Activated CD4-positive, alpha-beta T cell treated with anti-CD3 and anti-CD28 coated beads, Interleukin-2, amount 10 ng/mL, durations not matched to agents 24 days and 14 days (primary cell): ENCODE measurements at regions of chr2 and their contacts with region 1.

Region 1: DNA sequence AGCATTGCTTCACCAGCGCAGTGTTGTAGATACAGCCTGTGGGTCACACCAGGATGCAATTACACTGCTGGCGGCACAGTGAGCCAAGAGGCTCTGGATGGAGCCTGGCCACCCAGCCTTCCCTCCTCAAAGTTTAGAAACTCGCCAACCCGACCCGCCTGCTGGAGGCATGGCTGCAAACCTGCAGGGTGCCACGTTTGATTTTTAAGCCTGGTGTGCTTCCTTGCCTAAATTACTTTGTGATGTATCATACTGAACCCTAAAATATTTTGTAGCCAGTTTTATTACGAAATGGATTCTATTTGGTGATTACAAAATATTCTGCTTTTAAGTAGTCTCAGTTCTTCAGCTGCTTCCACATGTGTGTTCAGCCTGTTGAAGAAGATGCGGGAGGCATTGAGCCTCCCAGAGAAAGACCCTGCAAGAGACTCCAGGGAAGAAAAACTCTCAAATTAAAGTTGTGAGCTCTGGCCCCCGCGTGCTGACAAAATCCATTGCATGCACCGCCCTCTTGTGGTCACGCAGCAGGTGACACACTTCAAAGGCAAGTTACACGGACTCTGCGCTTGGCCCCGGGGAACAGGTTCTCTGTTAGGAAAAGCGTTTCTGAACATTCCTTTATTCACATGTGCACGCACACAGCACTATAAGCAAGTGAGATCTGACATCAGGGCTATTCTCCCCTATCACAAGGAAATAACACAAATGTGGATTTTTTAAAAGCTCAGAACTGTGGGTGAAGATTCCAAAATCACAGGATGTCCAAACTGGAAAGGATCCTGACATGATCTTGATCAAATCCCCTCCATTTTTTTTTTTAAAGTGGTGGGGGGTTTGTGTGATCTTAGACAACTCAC is 63.0 kb upstream of the TWIST2 start:
- DNase-seq: peak; percentile 84
- H3K4me3 Mint-ChIP-seq: no peak overlapping the region
- H3K27ac Mint-ChIP-seq: no peak overlapping the region
- H3K4me1 Mint-ChIP-seq: no peaks in the 10 kb centered on the region
- H3K27me3 Mint-ChIP-seq: no peaks in the 10 kb centered on the region

Region 2: DNA sequence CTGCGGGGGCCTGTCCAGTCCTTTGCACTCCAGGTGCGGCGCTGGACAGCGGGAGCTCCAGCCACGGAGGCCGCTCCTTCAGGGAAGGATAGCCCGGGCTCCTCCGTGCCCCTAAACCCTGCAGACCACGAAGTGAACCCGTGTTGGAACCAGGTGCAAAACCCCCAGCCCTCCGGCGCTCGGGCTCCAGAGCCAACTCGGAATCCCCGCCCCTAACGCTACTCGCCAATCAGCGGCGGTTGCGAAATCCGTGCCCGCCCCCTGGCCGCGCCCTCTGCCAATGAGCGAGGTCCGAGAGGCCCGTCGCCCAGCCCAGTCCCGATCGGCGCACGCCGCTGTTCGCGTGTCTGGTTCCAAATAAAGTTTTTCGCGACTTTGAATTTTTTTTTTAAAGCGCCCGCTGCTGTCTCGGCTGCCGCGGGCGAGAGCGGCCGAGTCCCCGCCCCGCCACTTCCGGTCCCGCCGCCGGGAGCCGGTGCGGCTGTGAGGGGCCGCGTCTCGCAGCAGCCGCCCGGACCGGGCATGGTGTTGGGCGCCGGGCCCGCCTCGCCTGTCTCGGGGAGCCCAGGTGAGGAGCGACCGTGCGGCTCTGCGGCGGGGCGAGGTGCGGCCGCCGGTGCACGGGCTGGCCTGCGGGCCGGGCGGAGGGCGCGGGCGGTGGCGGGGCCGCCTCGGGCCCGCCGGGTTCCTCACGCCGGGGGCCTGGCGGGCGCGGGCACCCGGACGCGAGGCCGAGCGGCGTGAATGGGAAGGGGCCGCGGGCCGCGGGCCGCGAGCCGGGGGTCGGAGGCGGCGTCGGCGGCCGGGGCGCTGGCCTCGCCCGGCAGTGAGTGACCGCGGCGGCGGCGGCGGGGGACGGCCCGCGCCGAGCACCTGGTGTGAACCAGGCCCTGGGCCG is 818.1 kb before region 1 on chr2 and contains the start of gene UBE2F:
- intact Hi-C with region 1: no loop called
- DNase-seq: peak; percentile 100
- H3K4me3 Mint-ChIP-seq: peak within 1 kb of the TSS; percentile 94
- H3K27ac Mint-ChIP-seq: peak within 1 kb of the TSS; percentile 92
- H3K4me1 Mint-ChIP-seq: peaks cover 33% of the 10 kb centered on the region
- H3K27me3 Mint-ChIP-seq: no peaks in the 10 kb centered on the region
- total RNA-seq, gene UBE2F: 115 and 124 TPM in 2 replicates

Region 3: DNA sequence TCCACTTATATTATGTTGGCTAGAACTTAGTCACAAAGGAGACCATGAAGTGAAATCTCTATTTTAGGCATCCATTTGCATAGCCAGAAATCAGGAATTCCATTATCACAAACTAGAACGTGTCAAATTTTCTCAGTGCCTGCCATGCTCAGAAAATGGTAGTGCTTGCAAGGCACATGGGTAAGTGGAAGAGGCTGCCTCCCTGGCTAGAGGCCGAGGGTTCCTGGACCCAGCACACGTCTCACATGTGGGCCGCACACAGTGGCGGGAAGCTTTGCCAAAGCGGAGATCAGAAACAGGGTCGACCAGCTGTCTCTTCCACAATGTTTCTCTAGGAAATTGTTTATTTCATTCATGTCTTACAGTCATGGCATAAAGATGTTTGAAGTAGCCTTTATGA is 422.3 kb before region 1 on chr2:
- intact Hi-C with region 1: loop called (anchors 5 kb)
- DNase-seq: no peak
- H3K4me3 Mint-ChIP-seq: no peak overlapping the region
- H3K27ac Mint-ChIP-seq: no peak overlapping the region
- H3K4me1 Mint-ChIP-seq: peaks cover 17% of the 10 kb centered on the region
- H3K27me3 Mint-ChIP-seq: no peaks in the 10 kb centered on the region

Region 4: GRCh38 chr2:238513346-238513745 is 271.6 kb before region 1 on chr2:
- intact Hi-C with region 1: loop called (anchors 10 kb)
- DNase-seq: peak; percentile 76
- H3K4me3 Mint-ChIP-seq: no peak overlapping the region
- H3K27ac Mint-ChIP-seq: no peak overlapping the region
- H3K4me1 Mint-ChIP-seq: peaks cover 4% of the 10 kb centered on the region
- H3K27me3 Mint-ChIP-seq: peaks cover 4% of the 10 kb centered on the region

Region 5: DNA sequence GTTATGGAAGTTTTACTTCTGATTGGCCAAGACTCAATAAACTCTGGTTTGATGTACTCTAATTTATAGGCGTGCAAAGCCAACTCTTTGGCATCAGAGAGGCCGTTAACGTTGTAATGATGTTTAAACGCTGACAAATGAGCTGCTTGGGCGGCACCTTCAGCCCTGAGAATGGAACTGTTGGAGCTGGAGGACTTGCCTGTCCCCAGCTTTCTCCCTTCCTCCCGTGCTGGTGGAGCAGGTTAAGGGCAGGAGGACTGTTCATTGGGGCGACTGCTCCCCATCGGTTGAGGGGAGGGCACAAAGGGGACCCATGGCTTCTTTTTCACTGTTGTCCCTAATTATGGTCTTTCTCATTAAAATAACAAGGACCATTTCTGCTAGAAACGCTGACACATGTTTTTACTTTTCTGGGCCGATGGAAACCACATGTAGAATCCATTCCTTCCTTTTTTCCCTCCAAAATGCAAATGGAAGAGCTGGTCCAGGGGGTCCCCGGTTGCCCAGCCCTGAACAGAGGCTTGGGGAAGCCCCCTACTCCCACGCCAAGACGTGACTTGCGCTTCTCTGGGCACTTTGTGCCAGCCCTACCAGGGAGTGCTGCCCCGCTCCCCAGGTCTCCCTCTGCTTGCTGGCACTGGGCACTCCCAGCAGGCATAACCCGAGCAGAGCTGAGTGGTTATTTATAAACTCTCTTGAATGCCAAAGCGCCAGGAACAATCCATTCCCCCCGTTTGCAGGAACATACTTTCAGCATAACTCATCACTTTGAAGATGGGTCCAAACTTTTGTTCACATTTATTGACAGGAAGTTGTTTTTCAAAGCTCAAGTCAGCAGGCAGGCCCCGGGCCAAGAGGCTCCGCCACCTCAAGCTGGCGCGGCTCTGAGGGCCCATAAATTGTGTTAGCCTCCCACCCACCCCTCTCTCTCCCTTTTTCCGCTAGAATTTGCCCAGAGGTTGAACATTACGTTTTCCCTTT is 188.0 kb before region 1 on chr2:
- intact Hi-C with region 1: no loop called
- DNase-seq: no peak
- H3K4me3 Mint-ChIP-seq: no peak overlapping the region
- H3K27ac Mint-ChIP-seq: no peak overlapping the region
- H3K4me1 Mint-ChIP-seq: no peaks in the 10 kb centered on the region
- H3K27me3 Mint-ChIP-seq: peaks cover 2% of the 10 kb centered on the region